Panc1 (cell line): ENCODE measurements at regions of chr3 and their contacts with region 1.

Region 1: DNA sequence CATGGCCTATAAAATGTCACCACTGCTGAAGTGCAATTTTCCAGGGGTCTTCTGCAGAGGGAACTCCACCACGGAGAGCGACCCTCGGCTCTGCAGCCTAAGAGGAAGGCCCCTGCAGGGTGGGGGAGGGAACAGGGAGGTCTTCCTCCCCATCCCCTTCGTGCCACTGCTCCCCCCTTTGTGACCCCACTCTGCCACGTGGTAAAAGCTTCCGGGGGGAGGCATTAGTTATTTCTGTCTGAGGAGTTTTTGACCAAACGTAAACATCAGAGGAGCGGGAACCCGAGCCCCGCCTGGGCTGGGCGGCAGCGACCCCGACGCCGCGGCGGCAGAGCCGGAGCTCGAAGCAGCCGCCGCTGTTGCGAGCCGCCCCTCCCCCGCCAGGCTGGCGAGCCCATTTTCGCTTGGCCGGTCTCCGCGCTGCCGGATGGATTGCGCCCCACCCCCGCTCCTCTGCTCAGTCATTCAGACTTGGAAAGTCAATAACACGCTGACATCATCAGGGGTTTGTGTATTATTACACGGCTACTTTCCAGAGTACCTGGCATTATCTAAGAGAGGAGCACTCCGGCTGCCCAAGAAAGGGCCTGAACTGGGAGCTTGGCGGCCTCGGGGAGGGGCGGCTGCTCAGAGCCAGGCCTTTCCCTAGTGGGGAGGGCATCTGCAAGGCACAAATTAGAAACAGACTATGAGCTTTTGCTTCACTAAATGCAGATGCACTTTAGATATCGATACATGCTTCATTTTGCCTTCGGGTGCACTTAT is 162.5 kb upstream of the TBL1XR1 start:
- DNase-seq: peak; percentile 89
- ATAC-seq: peak; percentile 91
- H3K4me3 ChIP-seq: peak overlapping the region; percentile 15 to 52
- H3K27ac ChIP-seq: peak overlapping the region; percentile 99
- H3K4me1 ChIP-seq: peaks cover 48% of the 10 kb centered on the region
- H3K27me3 ChIP-seq: no peaks in the 10 kb centered on the region
- CTCF ChIP-seq: no peak

Region 2: GRCh38 chr3:177050501-177051237 is 309.1 kb before region 1 on chr3:
- CTCF ChIA-PET with region 1: no interaction called
- POLR2A ChIA-PET with region 1: no interaction called
- in situ Hi-C with region 1: no loop called
- intact Hi-C with region 1: loop called (anchors 1 kb)
- DNase-seq: peak; percentile 30
- ATAC-seq: peak; percentile 84
- H3K4me3 ChIP-seq: no peak overlapping the region
- H3K27ac ChIP-seq: peak overlapping the region; percentile 85
- H3K4me1 ChIP-seq: peaks cover 34% of the 10 kb centered on the region
- H3K27me3 ChIP-seq: no peaks in the 10 kb centered on the region
- CTCF ChIP-seq: peak; percentile 69; the same call in 1 of the 2 replicates

Region 3: GRCh38 chr3:177251755-177252154 is 108.0 kb before region 1 on chr3:
- CTCF ChIA-PET with region 1: interaction called, 13 read pairs
- POLR2A ChIA-PET with region 1: no interaction called
- in situ Hi-C with region 1: no loop called
- intact Hi-C with region 1: no loop called
- DNase-seq: no peak
- ATAC-seq: no peak
- H3K4me3 ChIP-seq: no peak overlapping the region
- H3K27ac ChIP-seq: no peak overlapping the region
- H3K4me1 ChIP-seq: peaks cover 5% of the 10 kb centered on the region; the same call in 1 of the 2 replicates
- H3K27me3 ChIP-seq: no peaks in the 10 kb centered on the region
- CTCF ChIP-seq: no peak

Region 4: DNA sequence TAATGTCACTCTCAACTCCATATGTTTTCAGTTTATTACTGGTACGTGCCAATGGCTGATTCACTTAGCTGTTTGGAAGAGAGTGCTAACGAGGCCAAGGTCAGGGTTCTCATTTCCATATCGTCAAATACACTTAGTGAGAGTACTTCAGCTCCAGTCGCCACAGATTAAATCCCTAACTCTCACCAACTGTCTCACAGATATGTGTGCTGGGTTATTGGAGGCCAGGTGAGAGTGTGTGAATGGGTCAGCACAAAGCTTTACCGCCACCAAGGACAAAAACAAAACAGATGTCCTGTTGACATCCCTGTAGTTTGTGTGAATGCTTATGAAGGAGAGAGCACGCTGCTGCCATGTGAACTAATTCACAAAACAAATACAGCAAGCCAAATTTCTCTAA is 29.0 kb before region 1 on chr3:
- CTCF ChIA-PET with region 1: no interaction called
- POLR2A ChIA-PET with region 1: no interaction called
- in situ Hi-C with region 1: no loop called
- intact Hi-C with region 1: no loop called
- DNase-seq: no peak
- ATAC-seq: no peak
- H3K4me3 ChIP-seq: no peak overlapping the region
- H3K27ac ChIP-seq: peak overlapping the region; percentile 49; the same call in 1 of the 2 replicates
- H3K4me1 ChIP-seq: no peaks in the 10 kb centered on the region
- H3K27me3 ChIP-seq: no peaks in the 10 kb centered on the region
- CTCF ChIP-seq: no peak

Region 5: GRCh38 chr3:177459401-177459800 is 99.6 kb after region 1 on chr3:
- CTCF ChIA-PET with region 1: no interaction called
- POLR2A ChIA-PET with region 1: no interaction called
- in situ Hi-C with region 1: no loop called
- intact Hi-C with region 1: no loop called
- DNase-seq: no peak
- ATAC-seq: no peak
- H3K4me3 ChIP-seq: no peak overlapping the region
- H3K27ac ChIP-seq: peak overlapping the region; percentile 41; the same call in 1 of the 2 replicates
- H3K4me1 ChIP-seq: no peaks in the 10 kb centered on the region
- H3K27me3 ChIP-seq: no peaks in the 10 kb centered on the region
- CTCF ChIP-seq: no peak

Region 6: GRCh38 chr3:177478170-177478860 is 118.5 kb after region 1 on chr3:
- CTCF ChIA-PET with region 1: interaction called, 5 read pairs
- POLR2A ChIA-PET with region 1: no interaction called
- in situ Hi-C with region 1: no loop called
- intact Hi-C with region 1: loop called (anchors 5 kb)
- DNase-seq: peak; percentile 95
- ATAC-seq: peak; percentile 98
- H3K4me3 ChIP-seq: peak overlapping the region in 1 of 2 experiments; percentile 21; a peak in 1 of 4 replicates
- H3K27ac ChIP-seq: peak overlapping the region; percentile 93
- H3K4me1 ChIP-seq: peaks cover 40% of the 10 kb centered on the region
- H3K27me3 ChIP-seq: no peaks in the 10 kb centered on the region
- CTCF ChIP-seq: no peak

Region 7: GRCh38 chr3:178385280-178385952 is 1025.6 kb after region 1 on chr3:
- CTCF ChIA-PET with region 1: no interaction called
- POLR2A ChIA-PET with region 1: no interaction called
- in situ Hi-C with region 1: no loop called
- intact Hi-C with region 1: loop called (anchors 10 kb)
- DNase-seq: peak; percentile 32
- ATAC-seq: peak; percentile 84
- H3K4me3 ChIP-seq: no peak overlapping the region
- H3K27ac ChIP-seq: peak overlapping the region; percentile 87
- H3K4me1 ChIP-seq: peaks cover 18% of the 10 kb centered on the region
- H3K27me3 ChIP-seq: no peaks in the 10 kb centered on the region
- CTCF ChIP-seq: peak; percentile 84; the same call in 1 of the 2 replicates